Mammary epithelial cell (primary cell): ENCODE measurements at regions of chr6 and their contacts with region 1.

Region 1: GRCh38 chr6:10733151-10733715 is 10.4 kb downstream of the TMEM14C start:
- DNase-seq: no peak
- H3K4me3 ChIP-seq: no peak overlapping the region
- H3K27ac ChIP-seq: no peak overlapping the region
- H3K4me1 ChIP-seq: peaks cover 8% of the 10 kb centered on the region
- H3K27me3 ChIP-seq: no peaks in the 10 kb centered on the region
- CTCF ChIP-seq: no peak

Region 2: GRCh38 chr6:10542213-10542612 is 191.0 kb before region 1 on chr6:
- CTCF ChIA-PET with region 1: no interaction called
- dilution Hi-C with region 1: no loop called
- in situ Hi-C with region 1: no loop called
- intact Hi-C with region 1: no loop called
- DNase-seq: no peak
- H3K4me3 ChIP-seq: no peak overlapping the region
- H3K27ac ChIP-seq: no peak overlapping the region
- H3K4me1 ChIP-seq: no peaks in the 10 kb centered on the region
- H3K27me3 ChIP-seq: no peaks in the 10 kb centered on the region
- CTCF ChIP-seq: no peak

Region 3: DNA sequence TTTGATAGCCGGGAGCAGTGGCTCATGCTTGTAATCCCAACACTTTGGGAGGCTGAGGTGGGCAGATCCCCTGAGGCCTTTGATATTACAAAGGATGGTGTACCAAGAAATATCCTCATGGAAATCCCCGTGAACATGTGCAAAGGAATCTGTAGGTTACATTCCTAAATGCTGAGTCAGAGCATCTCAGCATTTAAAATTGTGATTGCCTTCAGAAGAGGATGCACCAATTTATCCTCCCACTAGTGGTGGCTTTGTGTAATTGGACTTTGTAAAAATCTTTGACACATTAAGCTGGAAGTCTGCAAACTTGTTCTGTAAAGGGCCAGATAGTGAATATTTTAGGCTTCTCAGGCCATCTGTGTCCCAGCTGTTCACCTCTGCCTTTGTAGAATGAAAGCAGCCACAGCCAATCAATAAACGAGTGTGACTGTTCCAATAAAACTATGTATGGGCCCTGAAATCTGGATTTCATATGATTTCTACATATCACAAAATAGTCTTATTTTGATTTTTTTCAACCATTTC is 26.1 kb after region 1 on chr6:
- CTCF ChIA-PET with region 1: no interaction called
- dilution Hi-C with region 1: no loop called
- in situ Hi-C with region 1: no loop called
- intact Hi-C with region 1: loop called (anchors 1 kb)
- DNase-seq: peak; percentile 96
- H3K4me3 ChIP-seq: no peak overlapping the region
- H3K27ac ChIP-seq: peak overlapping the region; percentile 84
- H3K4me1 ChIP-seq: peaks cover 21% of the 10 kb centered on the region
- H3K27me3 ChIP-seq: no peaks in the 10 kb centered on the region
- CTCF ChIP-seq: peak; percentile 58 to 67